Uterus (tissue), 4 donors: ENCODE measurements at regions of chr17 and their contacts with region 1.

Region 1: DNA sequence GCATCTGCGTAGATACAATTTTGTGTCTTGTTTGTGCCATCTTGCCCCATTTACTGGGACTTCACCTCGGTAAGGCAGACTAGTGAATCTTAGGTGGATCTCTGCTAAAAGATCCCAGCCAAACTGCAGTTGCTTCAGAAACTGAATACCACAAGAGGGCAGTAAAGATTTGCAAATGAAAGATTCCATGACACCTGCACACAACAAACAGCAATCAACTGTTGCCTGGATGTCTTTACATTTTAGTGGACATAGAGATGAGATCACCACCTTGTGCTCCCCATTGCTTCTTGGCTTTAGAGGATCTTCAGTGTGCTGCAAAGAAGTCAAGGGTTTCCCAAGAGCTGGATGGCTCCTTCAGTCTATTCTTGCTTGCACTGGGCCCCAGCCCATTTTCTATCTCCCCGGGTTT is 119.2 kb upstream of the CACNG5 start:
- DNase-seq: no peak
- H3K4me3 ChIP-seq: no peak overlapping the region
- H3K27ac ChIP-seq: no peak overlapping the region
- H3K4me1 ChIP-seq: no peaks in the 10 kb centered on the region
- H3K27me3 ChIP-seq: no peaks in the 10 kb centered on the region
- CTCF ChIP-seq: peak; percentile 58 to 74 (median 68)
- POLR2A ChIP-seq: no peak

Region 2: DNA sequence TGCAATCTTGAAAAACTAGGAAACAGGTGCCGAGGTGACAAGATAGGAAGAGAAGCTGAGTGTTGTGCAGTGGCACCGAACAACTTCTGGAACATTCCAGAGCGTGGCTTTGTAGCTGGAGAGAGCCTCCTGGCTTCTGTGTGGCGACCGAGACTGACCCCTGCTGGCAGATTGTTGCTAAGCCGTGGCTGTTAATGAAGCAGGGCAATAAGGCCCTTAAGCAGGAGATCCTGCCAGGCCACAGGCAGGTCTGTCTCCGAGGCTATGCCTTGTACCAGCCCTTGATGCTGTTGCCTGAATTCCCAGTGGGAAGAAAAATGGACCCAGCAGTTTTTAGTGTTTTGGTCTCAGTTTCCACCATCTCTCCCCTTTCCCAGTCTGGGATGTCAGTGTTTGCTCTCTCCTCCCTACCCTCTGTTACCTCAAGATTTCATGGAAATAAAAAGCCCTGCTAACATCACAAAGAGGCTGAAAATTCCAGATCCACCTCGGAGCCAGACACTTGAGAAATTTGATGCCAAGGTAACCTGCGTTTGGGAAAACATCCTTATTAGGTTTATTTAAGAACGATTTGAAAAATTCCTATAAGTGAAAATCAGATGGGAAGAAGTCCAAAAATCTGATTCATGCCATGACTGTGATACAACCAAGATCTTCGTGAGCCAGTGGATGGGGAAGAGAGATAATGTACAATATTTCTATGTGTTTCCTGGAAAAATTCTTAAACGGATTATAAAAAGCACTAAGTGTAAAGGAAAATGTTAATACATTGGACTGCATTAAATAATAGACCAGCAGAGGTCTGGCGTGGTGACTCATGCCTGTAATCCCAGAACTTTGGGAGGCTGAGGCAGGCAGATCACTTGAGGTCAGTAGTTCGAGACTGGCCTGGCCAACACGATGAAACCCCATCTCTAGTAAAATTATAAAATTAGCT is 148.2 kb before region 1 on chr17:
- intact Hi-C with region 1: no loop called
- DNase-seq: peak; percentile 75 to 78
- H3K4me3 ChIP-seq: no peak overlapping the region
- H3K27ac ChIP-seq: no peak overlapping the region
- H3K4me1 ChIP-seq: no peaks in the 10 kb centered on the region
- H3K27me3 ChIP-seq: no peaks in the 10 kb centered on the region
- CTCF ChIP-seq: peak; percentile 66 to 76 (median 73)
- POLR2A ChIP-seq: no peak

Region 3: DNA sequence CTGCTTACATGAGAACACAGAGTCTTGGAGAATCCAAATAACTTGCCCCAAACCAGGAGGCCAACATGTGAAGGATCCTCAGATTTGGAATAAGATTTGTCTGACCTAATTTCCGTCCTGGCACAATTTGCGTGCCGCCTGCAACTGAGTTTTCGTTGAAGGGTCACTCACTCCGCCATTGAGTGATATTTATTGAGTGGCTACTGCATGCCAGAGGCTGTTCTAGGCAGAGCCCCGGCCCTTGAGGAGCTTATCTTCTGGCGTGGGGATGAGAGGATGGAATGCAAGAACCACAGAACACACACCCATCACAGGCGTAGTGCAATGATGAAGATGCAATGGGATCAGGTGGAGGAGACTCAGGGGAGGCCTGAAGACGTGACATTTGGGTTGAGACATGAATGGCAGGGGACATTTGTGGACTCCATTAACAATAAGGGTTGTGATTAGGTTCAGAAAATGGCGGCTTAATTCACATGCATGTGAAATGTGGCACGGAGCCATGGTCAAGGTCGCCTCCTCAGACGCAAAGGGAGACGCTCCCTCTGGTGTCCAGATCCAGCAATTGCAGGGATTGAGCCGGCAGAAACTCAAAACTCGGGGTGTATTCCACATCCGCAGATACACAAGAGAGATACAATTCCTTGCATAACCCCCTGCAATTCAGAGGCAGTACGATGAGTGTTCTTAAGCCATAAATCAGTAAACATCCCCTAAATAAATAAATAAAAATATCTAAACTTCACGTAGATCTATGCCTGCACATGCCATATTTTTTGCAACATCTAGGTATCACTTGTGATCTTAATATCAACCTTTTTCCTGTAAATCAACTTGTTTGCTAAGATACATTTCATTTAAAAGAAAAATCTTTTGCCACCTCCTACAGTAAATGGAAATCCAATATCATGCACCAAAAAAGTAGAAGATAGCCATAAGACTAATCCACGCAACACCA is 190.8 kb after region 1 on chr17:
- intact Hi-C with region 1: loop called (anchors 10 kb)
- DNase-seq: peak; percentile 71
- H3K4me3 ChIP-seq: no peak overlapping the region
- H3K27ac ChIP-seq: no peak overlapping the region
- H3K4me1 ChIP-seq: no peaks in the 10 kb centered on the region
- H3K27me3 ChIP-seq: no peaks in the 10 kb centered on the region
- CTCF ChIP-seq: peak; percentile 71 to 77 (median 76)
- POLR2A ChIP-seq: no peak